ENCODE measurements at regions of chr9 and their contacts with region 1.

Region 1: DNA sequence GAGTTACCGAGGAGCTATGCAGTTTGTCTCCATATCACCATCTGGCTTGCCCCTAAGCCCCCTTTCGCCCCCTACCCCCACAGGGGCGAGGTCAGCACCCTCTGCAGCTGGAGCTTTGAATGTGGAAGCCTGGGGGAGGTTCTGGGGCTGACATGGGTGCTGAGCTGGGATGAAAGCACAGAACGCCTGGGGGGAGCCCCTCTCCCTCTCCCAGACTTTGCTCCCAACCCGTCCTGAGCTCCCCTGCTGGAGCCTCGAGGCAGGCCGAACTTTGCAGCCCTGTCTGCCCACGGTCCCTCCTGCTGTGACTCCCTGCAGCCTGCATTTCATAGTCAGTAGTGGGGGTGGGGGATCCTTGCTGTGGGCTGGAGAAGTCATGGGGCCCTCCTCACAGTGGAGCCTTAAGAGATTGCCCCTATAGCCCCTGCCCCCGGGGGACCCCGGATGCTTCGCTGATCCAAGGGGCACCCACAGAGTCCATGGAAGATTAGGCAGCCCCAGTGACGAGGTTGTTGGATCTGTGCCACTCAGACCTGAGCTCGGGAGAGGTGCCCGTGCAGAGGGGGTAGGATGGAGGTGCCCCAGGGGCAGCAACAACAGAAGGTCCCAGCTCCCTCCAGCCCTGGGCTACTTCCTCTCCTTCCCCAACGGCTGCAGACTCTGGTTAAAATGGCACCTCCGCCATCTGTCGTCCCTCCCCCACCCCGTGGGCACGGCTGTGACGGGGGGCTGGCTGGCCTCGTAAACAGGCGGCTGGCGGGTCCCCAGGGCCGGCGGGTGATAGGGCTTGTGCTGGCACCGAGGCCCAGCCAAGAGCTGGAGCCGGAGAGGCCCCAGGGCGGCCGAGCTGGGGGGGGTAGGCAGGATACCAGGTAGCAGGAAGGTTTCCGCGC is 162.0 kb downstream of the C9orf50 start:
- DNase-seq: peak; percentile 83
- ATAC-seq: peak; percentile 22

Region 2: DNA sequence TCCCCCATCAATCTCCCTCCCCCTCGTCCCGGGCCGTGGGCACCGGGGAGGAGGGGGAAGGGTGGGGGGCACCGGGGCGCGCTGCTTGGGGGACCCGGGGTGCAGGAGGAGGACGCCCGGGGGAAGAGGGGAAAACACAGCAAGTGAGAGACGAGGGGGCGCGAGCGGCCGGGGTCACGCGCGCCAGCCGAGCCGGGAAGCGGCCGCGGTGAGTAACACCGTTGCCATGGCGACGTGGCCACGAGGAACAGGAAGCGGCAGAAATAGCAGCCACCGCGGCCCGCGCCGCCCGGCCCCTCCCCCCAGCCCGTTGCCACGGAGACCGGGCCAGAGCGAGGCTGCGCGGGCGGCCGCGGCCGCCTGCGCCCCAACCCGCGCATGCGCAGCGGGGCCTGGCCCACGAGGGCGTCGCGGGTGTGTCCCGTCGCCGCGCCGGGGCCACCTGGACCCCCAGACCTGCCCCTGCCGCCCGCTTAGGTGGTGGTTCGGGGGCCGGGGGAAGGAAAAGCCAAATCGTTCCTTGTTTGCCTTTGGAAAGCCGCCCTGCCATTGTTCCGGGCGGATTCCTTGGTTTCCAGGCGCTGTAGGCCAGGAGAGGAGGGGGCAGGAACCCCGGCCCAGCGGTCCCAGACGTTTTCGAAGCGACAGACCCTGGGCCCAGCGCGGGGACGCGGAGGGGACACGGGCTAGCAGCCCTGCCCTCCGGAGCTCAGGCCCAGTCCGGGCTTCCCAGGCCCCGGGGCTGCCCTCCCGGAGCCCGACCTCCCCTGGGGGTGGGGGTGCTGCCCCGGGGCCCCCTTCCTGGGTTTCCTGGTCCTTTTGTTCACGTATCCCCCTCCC is 45.2 kb before region 1 on chr9:
- intact Hi-C with region 1: loop called (anchors 2 kb)
- DNase-seq: peak; percentile 100
- ATAC-seq: peak; percentile 91